A673 (cell line): ENCODE measurements at regions of chr18 and their contacts with region 1.

Region 1: DNA sequence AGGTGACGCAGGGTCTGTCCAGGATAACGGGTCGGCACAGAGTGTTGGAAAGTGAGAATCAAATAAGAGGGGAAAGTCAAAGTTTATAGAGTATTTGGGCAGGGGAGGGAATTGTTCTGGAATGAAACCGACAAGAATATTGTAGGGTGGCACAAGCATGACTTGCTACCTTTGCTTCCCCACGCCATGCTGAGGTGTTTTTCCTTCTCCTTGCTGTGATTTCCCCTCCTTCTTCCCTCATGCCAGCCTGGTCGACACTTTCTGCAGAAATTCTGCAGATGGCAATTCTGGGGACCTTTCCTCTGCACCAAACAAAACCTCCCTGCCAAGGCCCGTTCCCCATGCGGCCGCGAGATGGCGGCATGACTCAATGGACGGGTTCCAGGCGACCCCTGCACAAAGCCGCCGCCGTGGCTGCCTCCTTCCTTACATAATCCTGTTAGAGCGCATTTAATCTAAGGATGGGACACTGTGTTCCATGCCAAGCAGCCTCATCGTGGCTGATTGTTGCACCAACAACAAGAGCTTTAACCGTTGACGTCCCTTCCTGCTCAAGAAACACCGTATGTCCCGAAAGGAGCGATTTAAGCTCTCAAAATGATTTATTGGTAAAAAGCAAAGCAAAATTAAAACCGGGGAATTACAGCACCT is at the start of gene MRO:
- DNase-seq: peak; percentile 91
- H3K4me3 ChIP-seq: peak within 1 kb of the TSS; percentile 36
- H3K27ac ChIP-seq: no peak within 1 kb of the TSS
- H3K4me1 ChIP-seq: peaks cover 20% of the 10 kb centered on the region
- H3K27me3 ChIP-seq: no peaks in the 10 kb centered on the region
- CTCF ChIP-seq: peak; percentile 98
- total RNA-seq, gene MRO: 0.28 and 0.32 TPM in 2 replicates

Region 2: DNA sequence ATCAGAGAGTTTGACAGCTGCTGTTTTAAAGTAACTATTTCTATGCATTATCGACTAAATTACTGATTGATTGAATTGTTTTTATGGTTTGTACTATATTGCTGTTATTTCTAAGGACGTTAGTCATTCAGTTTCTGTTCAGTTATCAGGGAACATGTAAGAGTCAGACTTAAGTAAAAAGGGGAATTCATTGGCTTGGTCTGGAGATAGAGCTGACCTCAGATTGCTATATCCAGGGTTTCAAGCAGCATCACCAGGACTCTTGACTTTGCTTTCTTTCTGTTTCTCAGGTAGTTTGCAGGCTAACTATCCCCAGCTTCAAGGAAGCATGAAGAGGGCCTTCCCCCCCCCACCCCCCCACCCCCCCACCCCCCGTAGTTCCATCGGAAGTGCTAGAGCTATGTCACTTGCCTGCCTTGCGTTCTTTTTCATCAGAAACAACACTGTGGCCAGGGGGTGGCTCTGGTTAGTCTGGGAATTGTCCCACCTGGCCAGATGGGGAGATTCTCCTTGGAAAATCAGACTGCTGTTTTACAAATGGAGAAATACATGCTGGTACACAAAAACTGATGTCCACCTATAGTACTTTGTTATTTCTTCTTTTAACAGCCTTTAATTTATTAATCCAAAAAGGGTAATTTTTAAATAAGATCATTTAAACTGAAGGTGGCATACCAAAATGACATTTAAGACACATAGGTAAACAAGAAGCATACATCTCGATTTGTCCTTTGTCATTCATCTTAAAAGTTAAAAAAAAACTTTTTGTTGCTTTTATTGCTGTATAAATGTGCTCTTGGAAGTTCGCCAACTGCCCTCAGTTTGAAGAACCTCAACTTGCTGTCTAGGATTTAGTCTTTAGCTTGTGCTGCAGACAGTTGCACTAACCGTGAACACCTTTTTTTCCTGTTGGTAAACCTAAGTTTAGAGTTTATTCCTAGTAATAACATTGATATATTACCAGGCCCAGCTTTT is 219.6 kb after region 1 on chr18:
- CTCF ChIA-PET with region 1: no interaction called
- POLR2A ChIA-PET with region 1: no interaction called
- intact Hi-C with region 1: loop called (anchors 5 kb)
- DNase-seq: peak; percentile 11
- H3K4me3 ChIP-seq: no peak overlapping the region
- H3K27ac ChIP-seq: no peak overlapping the region
- H3K4me1 ChIP-seq: peaks cover 32% of the 10 kb centered on the region
- H3K27me3 ChIP-seq: no peaks in the 10 kb centered on the region
- CTCF ChIP-seq: no peak

Region 3: GRCh38 chr18:51051105-51051712 is 231.4 kb after region 1 on chr18:
- CTCF ChIA-PET with region 1: no interaction called
- POLR2A ChIA-PET with region 1: no interaction called
- intact Hi-C with region 1: loop called (anchors 2 kb)
- DNase-seq: peak; percentile 72
- H3K4me3 ChIP-seq: no peak overlapping the region
- H3K27ac ChIP-seq: no peak overlapping the region
- H3K4me1 ChIP-seq: no peaks in the 10 kb centered on the region
- H3K27me3 ChIP-seq: no peaks in the 10 kb centered on the region
- CTCF ChIP-seq: peak; percentile 87

Region 4: DNA sequence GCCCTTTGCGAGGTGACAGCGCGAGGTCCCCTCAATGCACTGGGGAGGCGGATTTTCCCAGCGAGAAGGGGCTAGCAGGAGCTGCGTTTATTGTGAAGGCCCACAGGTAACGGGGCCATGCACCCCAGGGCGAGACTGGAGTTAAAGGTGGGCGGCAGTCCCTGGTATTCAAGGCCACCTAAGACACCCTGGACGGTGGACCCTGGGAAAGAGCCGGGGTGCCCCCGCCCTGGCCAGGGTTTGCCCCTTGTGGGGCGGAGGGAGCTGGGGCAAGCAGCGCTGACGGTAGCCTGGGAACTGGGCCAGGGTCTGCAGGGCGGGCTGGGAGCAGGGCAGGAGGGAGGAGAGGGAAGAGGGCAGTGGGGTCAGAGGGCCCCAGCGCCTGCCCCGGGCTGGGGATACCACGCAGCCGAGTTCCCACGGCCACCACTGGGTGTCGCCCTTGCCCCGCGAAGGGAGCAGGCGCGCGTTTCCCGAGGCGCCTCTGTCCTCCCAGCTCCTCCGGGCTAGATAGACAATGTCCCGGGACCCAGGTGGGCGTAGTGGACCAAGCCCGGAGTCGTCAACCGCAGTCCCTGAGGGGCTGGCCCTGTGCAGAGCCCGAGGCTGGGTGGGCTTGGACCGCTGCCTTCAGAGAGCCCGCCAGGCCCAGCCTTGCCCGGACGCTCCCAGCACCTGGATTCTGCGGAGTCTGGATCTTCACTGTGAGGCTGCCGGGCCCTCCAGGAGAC is 290.4 kb after region 1 on chr18:
- CTCF ChIA-PET with region 1: no interaction called
- POLR2A ChIA-PET with region 1: no interaction called
- intact Hi-C with region 1: loop called (anchors 10 kb)
- DNase-seq: peak; percentile 73
- H3K4me3 ChIP-seq: peak overlapping the region; percentile 21
- H3K27ac ChIP-seq: no peak overlapping the region
- H3K4me1 ChIP-seq: no peaks in the 10 kb centered on the region
- H3K27me3 ChIP-seq: no peaks in the 10 kb centered on the region
- CTCF ChIP-seq: peak; percentile 89